CD4-positive, alpha-beta memory T cell (primary cell): ENCODE measurements at regions of chr17 and their contacts with region 1.

Region 1: GRCh38 chr17:64420143-64420971 is 28.6 kb upstream of the MILR1 start:
- DNase-seq: peak in 4 of 5 donors; percentile 72 to 75 (median 73)
- H3K4me3 ChIP-seq: no peak overlapping the region
- H3K4me3 Mint-ChIP-seq: no peak overlapping the region
- H3K27ac ChIP-seq: no peak overlapping the region
- H3K27ac Mint-ChIP-seq: no peak overlapping the region
- H3K4me1 ChIP-seq: peaks cover 5% of the 10 kb centered on the region
- H3K4me1 Mint-ChIP-seq: peaks cover 0 to 3% (median 0%) of the 10 kb centered on the region in 4 donors
- H3K27me3 ChIP-seq: no peaks in the 10 kb centered on the region
- H3K27me3 Mint-ChIP-seq: peaks cover 0 to 1% of the 10 kb centered on the region in 2 donors

Region 2: DNA sequence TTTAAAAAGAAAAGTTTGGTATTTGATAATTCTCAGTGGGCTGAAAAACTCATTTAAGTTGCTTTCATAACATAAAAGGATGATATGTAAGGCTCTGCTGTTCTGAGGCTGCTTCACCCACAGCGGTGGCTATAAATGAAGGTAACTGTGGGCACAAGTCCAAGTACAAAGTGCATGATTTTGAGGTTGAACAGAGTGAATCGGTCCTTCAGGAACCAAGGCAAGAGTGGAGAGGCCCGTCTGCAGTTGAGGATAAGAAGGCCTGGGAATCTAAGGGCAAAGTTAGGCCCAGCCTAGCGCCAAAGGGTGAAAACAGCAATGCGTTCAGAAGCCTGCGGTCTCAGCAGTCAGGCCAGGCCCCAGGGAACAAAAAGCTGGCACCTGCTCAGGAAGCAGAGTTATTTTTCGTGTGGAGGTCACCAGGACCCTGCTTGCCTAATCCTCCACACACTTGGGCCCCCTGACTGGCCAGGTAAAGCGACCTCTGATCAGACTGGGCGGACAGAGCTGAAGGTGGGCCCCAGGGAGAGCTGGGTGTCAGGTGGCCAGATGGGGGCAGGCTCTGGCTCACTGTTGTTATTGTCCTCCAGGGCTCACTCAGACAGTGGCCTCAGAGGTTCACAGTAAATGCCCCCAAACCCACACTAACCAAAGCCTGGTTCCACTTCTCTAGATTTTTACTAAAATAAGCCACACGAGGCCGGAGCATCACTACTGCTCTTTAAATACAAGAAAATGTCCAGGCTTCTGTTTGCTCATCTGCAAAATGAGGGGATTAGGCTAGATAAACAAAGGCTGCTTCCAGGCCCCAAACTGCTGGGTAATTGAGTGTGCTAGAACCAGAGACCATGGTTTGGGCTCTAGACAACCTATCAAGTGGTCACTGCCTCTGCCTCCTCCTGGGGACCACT is 203.8 kb before region 1 on chr17:
- CTCF ChIA-PET with region 1: no interaction called
- POLR2A ChIA-PET with region 1: no interaction called
- intact Hi-C with region 1: no loop called
- DNase-seq: no peak
- H3K4me3 ChIP-seq: no peak overlapping the region
- H3K4me3 Mint-ChIP-seq: no peak overlapping the region
- H3K27ac ChIP-seq: no peak overlapping the region
- H3K27ac Mint-ChIP-seq: no peak overlapping the region
- H3K4me1 ChIP-seq: no peaks in the 10 kb centered on the region
- H3K4me1 Mint-ChIP-seq: peaks cover 3 to 11% (median 8%) of the 10 kb centered on the region in 4 donors
- H3K27me3 ChIP-seq: no peaks in the 10 kb centered on the region
- H3K27me3 Mint-ChIP-seq: no peaks in the 10 kb centered on the region

Region 3: GRCh38 chr17:64320613-64321553 is 99.5 kb before region 1 on chr17:
- CTCF ChIA-PET with region 1: interaction called, 257 read pairs
- POLR2A ChIA-PET with region 1: interaction called, 4 read pairs
- intact Hi-C with region 1: loop called (anchors 1 kb)
- DNase-seq: peak; percentile 49 to 65 (median 60)
- H3K4me3 ChIP-seq: no peak overlapping the region
- H3K4me3 Mint-ChIP-seq: peak overlapping the region in 6 of 8 donors; percentile 49 to 86 (median 68)
- H3K27ac ChIP-seq: no peak overlapping the region
- H3K27ac Mint-ChIP-seq: peak overlapping the region in 1 of 7 donors; percentile 25
- H3K4me1 ChIP-seq: peaks cover 4% of the 10 kb centered on the region
- H3K4me1 Mint-ChIP-seq: peaks cover 0 to 5% (median under 1%) of the 10 kb centered on the region in 4 donors
- H3K27me3 ChIP-seq: no peaks in the 10 kb centered on the region
- H3K27me3 Mint-ChIP-seq: peaks cover 2 to 16% of the 10 kb centered on the region in 2 donors

Region 4: DNA sequence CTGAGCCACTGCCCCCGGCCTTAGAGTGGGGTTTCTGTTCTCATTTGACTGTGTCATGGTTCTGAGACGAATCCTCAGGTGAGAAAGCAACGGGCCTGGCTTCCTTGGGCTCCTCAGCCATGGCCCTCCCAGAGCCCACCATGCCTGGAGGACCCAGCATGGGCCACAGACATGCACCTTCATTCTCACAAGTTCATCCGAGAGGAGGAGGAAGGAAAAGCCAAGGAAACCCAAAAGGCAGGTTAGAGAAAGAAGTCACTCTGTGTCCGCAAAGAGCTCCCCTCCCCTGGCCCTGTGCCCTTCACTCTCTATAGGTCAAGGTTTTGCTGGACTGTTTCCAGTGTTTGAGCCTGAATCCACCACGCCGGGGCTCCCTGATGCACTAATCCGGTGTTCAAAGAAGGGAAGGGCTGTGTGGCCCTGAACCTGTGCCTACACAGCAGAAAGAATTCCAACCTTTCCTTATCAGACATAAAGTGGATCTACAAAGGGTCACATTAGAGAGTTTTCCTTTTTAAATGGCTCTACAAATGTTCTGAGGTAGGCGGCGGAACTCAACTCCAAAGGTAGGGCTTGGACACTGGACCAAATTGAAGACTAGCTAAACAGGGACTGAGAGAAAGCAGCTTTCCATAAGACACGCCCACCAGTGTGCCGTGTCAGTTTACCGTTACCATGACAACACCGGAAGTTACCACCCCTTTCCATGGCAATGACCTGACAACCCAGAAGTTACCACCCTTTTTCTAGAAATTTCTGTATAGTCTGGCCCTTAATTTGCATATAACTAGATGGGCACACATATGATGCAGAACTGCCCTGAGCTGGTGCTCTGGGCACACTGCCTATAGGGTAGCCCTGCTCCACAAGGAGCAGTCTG is 13.8 kb before region 1 on chr17:
- CTCF ChIA-PET with region 1: interaction called, 28 read pairs
- POLR2A ChIA-PET with region 1: interaction called, 5 read pairs
- intact Hi-C with region 1: no loop called
- DNase-seq: peak in 2 of 5 donors; percentile 10 to 23
- H3K4me3 ChIP-seq: no peak overlapping the region
- H3K4me3 Mint-ChIP-seq: no peak overlapping the region
- H3K27ac ChIP-seq: no peak overlapping the region
- H3K27ac Mint-ChIP-seq: peak overlapping the region in 1 of 7 donors; percentile 24
- H3K4me1 ChIP-seq: no peaks in the 10 kb centered on the region
- H3K4me1 Mint-ChIP-seq: peaks cover 4 to 6% (median 5%) of the 10 kb centered on the region in 4 donors
- H3K27me3 ChIP-seq: no peaks in the 10 kb centered on the region
- H3K27me3 Mint-ChIP-seq: no peaks in the 10 kb centered on the region

Region 5: GRCh38 chr17:64491034-64491859 is 70.9 kb after region 1 on chr17:
- CTCF ChIA-PET with region 1: interaction called, 287 read pairs
- POLR2A ChIA-PET with region 1: interaction called, 19 read pairs
- intact Hi-C with region 1: loop called (anchors 1 kb)
- DNase-seq: peak; percentile 40 to 58 (median 49)
- H3K4me3 ChIP-seq: no peak overlapping the region
- H3K4me3 Mint-ChIP-seq: no peak overlapping the region
- H3K27ac ChIP-seq: no peak overlapping the region
- H3K27ac Mint-ChIP-seq: peak overlapping the region in 3 of 7 donors; percentile 12 to 57 (median 18)
- H3K4me1 ChIP-seq: peaks cover 35% of the 10 kb centered on the region
- H3K4me1 Mint-ChIP-seq: peaks cover 21 to 42% (median 23%) of the 10 kb centered on the region in 4 donors
- H3K27me3 ChIP-seq: no peaks in the 10 kb centered on the region
- H3K27me3 Mint-ChIP-seq: no peaks in the 10 kb centered on the region

Region 6: GRCh38 chr17:64534175-64534574 is 113.8 kb after region 1 on chr17:
- CTCF ChIA-PET with region 1: interaction called, 22 read pairs
- POLR2A ChIA-PET with region 1: no interaction called
- intact Hi-C with region 1: no loop called
- DNase-seq: no peak
- H3K4me3 ChIP-seq: no peak overlapping the region
- H3K4me3 Mint-ChIP-seq: no peak overlapping the region
- H3K27ac ChIP-seq: no peak overlapping the region
- H3K27ac Mint-ChIP-seq: peak overlapping the region in 3 of 7 donors; percentile 37 to 48 (median 43)
- H3K4me1 ChIP-seq: no peaks in the 10 kb centered on the region
- H3K4me1 Mint-ChIP-seq: peaks cover 0 to 2% (median 0%) of the 10 kb centered on the region in 4 donors
- H3K27me3 ChIP-seq: no peaks in the 10 kb centered on the region
- H3K27me3 Mint-ChIP-seq: no peaks in the 10 kb centered on the region

Region 7: DNA sequence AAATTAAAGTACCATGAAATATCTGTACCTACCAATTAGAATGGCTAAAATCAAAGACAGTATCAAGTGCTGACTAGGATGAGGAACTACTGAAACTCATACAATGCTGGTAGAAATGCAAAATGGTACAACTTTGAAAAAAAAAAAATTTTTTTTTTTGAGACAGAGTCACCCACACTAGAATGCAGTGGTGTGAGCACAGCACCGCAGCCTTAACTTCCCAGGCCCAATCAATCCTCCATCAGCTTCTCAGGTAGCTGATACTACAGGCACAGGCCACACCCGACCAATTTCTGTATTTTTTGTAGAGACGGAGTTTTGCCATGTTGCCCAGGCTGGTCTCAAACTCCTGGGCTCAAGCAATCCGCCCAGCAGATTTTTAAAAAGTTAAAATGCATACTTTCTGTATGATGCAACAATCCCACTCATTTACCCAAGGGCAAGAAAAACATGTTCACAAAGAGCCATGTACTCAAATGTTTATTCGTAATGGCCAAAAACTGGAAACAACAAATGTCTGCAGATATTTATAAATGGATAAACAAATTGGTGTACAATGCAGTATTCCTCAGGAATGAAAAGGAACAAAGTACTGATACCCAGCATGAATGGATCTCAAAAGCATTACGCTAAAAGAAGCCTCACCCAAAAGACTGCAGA is 233.1 kb after region 1 on chr17:
- CTCF ChIA-PET with region 1: interaction called, 52 read pairs
- POLR2A ChIA-PET with region 1: no interaction called
- intact Hi-C with region 1: loop called (anchors 1 kb)
- DNase-seq: no peak
- H3K4me3 ChIP-seq: no peak overlapping the region
- H3K4me3 Mint-ChIP-seq: peak overlapping the region in 1 of 8 donors; percentile 25
- H3K27ac ChIP-seq: no peak overlapping the region
- H3K27ac Mint-ChIP-seq: no peak overlapping the region
- H3K4me1 ChIP-seq: peaks cover 31% of the 10 kb centered on the region
- H3K4me1 Mint-ChIP-seq: peaks cover 25 to 56% (median 38%) of the 10 kb centered on the region in 4 donors
- H3K27me3 ChIP-seq: no peaks in the 10 kb centered on the region
- H3K27me3 Mint-ChIP-seq: no peaks in the 10 kb centered on the region